Naive thymus-derived CD8-positive, alpha-beta T cell (primary cell): ENCODE measurements at regions of chr9 and their contacts with region 1.

Region 1: DNA sequence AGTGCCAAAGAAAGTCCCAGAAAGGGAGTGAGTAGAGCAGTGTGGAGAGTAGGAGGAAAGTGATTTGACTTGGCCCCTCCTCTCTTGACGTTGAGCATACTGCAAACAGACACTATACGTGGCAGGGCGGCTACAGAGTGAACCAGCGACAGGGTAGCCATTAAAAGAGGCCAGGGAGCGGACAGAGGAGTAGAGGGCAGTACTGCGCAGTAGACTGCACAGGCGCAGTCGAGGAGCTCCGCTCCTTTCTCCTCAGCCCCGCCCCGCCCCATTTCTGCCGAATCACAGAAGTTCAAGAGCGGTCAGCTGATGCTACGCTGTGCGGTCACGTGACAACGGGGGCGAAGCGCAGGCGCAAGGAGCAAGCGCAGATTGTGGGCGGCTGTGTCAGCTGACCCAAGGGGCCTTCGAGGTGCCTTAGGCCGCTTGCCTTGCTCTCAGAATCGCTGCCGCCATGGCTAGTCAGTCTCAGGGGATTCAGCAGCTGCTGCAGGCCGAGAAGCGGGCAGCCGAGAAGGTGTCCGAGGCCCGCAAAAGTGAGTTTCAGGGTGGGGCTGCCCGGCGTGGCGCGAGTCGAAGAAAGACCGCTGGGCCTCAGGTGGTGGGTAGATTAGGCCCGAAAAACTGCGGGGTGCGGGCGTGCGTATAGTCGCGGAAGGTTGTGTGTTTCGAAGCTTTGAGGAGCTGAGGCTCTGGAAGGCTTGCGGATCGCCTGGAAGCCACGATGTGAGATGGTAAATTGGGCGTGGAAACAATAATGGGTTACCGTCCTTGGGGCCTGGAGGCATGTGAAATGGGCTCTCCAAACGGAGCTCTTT is at the start of gene ATP6V1G1:
- DNase-seq: peak; percentile 91 to 100 (median 98)
- ATAC-seq: peak; percentile 87 to 90
- H3K4me3 Mint-ChIP-seq: peak within 1 kb of the TSS; percentile 96 to 100 (median 98)
- H3K27ac Mint-ChIP-seq: peak within 1 kb of the TSS; percentile 99 to 100 (median 100)
- H3K4me1 Mint-ChIP-seq: peaks cover 35 to 52% (median 49%) of the 10 kb centered on the region in 4 donors
- H3K27me3 Mint-ChIP-seq: no peaks in the 10 kb centered on the region
- polyA plus RNA-seq, gene ATP6V1G1: 298 to 381 (median 349) TPM

Region 2: GRCh38 chr9:114385412-114386181 is 202.0 kb before region 1 on chr9:
- POLR2A ChIA-PET with region 1: interaction called, 105 read pairs
- DNase-seq: peak; percentile 65 to 96 (median 90)
- ATAC-seq: peak; percentile 74 to 83
- H3K4me3 Mint-ChIP-seq: peak overlapping the region; percentile 89 to 100 (median 97)
- H3K27ac Mint-ChIP-seq: peak overlapping the region; percentile 95 to 100 (median 98)
- H3K4me1 Mint-ChIP-seq: peaks cover 41 to 91% (median 71%) of the 10 kb centered on the region in 4 donors
- H3K27me3 Mint-ChIP-seq: no peaks in the 10 kb centered on the region

Region 3: GRCh38 chr9:114505187-114506081 is 82.2 kb before region 1 on chr9 and contains the start of gene WHRN:
- POLR2A ChIA-PET with region 1: interaction called, 10 read pairs
- DNase-seq: peak; percentile 83 to 97 (median 92)
- ATAC-seq: peak; percentile 83 to 88
- H3K4me3 Mint-ChIP-seq: peak within 1 kb of the TSS; percentile 79 to 91 (median 87)
- H3K27ac Mint-ChIP-seq: peak within 1 kb of the TSS; percentile 37 to 96 (median 90)
- H3K4me1 Mint-ChIP-seq: peaks cover 2 to 26% (median 17%) of the 10 kb centered on the region in 4 donors
- H3K27me3 Mint-ChIP-seq: peaks cover 8 to 33% (median 21%) of the 10 kb centered on the region in 5 donors
- polyA plus RNA-seq, gene WHRN: 0.17 to 0.56 (median 0.43) TPM

Region 4: GRCh38 chr9:114546851-114547250 is 40.7 kb before region 1 on chr9:
- POLR2A ChIA-PET with region 1: no interaction called
- DNase-seq: no peak
- ATAC-seq: no peak
- H3K4me3 Mint-ChIP-seq: no peak overlapping the region
- H3K27ac Mint-ChIP-seq: no peak overlapping the region
- H3K4me1 Mint-ChIP-seq: peaks cover 0 to 3% (median 0%) of the 10 kb centered on the region in 4 donors
- H3K27me3 Mint-ChIP-seq: peaks cover 0 to 9% (median 5%) of the 10 kb centered on the region in 5 donors

Region 5: GRCh38 chr9:114611516-114612271 is 24.1 kb after region 1 on chr9:
- POLR2A ChIA-PET with region 1: interaction called, 105 read pairs
- DNase-seq: peak in 5 of 10 donors; percentile 36 to 65 (median 39)
- ATAC-seq: peak; percentile 69
- H3K4me3 Mint-ChIP-seq: peak overlapping the region; percentile 76 to 96 (median 90)
- H3K27ac Mint-ChIP-seq: peak overlapping the region; percentile 90 to 97 (median 94)
- H3K4me1 Mint-ChIP-seq: peaks cover 27 to 70% (median 55%) of the 10 kb centered on the region in 4 donors
- H3K27me3 Mint-ChIP-seq: no peaks in the 10 kb centered on the region

Region 6: DNA sequence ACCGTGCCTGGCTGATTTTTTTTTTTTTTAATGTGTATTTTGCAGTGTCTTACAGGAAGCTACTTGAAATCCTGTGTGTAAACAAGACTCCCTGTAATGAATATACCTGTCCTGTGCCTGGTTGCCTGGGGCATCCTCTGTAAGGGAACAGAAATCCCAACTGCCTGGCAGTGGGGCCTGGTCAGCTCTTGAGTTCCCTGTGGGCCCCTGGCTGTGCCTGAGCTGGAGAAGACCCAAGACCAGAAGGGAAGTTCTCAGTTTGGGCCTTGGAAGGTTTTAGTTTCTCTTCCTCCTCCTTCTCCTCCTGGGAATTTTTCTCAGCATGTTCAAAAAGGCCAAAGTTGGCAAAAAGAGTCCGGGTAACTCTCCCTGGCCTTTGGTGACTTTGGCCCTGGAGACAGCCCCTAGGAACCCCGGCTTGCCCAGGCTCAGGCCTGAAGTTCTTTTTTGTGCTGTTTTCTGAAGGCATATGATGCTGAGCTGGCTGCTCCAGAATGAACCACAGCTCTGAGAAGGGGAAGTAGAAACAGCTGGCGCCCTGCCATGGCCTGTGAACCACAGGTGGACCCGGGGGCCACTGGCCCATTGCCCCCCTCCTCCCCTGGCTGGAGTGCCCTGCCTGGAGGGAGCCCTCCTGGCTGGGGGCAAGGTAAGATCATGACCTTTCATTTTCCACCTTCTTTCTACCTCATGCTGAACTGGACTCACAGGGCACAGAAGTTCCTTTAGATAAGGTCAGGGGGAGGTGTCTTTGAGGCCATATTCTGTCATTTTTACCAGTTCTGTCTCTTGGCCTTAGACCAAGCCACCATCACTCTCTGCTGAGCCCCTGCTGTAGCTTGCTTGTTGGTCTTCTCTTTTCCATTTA is 29.3 kb after region 1 on chr9:
- POLR2A ChIA-PET with region 1: interaction called, 105 read pairs
- DNase-seq: peak in 2 of 10 donors; percentile 53 to 68
- ATAC-seq: peak; percentile 26 to 32
- H3K4me3 Mint-ChIP-seq: peak overlapping the region in 9 of 10 donors; percentile 41 to 72 (median 59)
- H3K27ac Mint-ChIP-seq: peak overlapping the region; percentile 71 to 96 (median 89)
- H3K4me1 Mint-ChIP-seq: peaks cover 38 to 71% (median 61%) of the 10 kb centered on the region in 4 donors
- H3K27me3 Mint-ChIP-seq: no peaks in the 10 kb centered on the region

Region 7: DNA sequence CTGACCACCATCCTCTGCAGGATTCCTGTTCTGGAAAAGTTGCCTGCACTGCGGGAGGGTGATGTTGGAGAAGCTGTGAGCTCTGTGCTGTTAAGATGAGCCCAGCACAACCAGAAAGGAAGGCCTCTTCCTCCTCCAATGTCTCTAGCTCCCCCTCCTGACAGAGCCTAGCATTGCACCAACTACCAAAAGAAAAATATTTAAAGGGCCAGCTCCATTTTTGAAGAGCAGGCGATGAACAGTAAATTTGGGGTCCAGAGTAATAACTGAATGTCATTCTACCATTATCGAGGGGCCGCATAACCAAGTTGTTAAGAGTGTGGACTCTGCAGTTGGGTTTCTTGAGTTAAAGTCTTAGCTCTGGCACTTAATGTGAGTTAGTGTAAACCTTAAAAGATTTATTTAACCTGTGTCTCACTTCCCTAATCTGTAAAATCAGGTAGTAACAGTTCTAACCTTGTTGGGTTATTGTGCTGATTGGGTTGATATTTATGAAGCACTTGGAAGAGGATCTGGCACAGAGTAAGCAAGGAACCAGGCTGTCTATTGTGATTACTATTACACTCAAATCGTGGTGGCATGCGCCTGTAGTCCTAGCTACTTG is 66.1 kb after region 1 on chr9:
- POLR2A ChIA-PET with region 1: interaction called, 46 read pairs
- DNase-seq: peak; percentile 57 to 92 (median 80)
- ATAC-seq: peak; percentile 89 to 91
- H3K4me3 Mint-ChIP-seq: no peak overlapping the region
- H3K27ac Mint-ChIP-seq: peak overlapping the region in 6 of 10 donors; percentile 30 to 74 (median 52)
- H3K4me1 Mint-ChIP-seq: peaks cover 10 to 21% (median 20%) of the 10 kb centered on the region in 4 donors
- H3K27me3 Mint-ChIP-seq: no peaks in the 10 kb centered on the region